Activated CD4-positive, alpha-beta T cell treated with anti-CD3 and anti-CD28 coated beads, Interleukin-2, amount 10 ng/mL, durations not matched to agents 24 days and 14 days (primary cell): ENCODE measurements at regions of chrX and their contacts with region 1.

Region 1: GRCh38 chrX:154458114-154458953 is at the start of gene PLXNA3:
- DNase-seq: peak; percentile 89
- H3K4me3 Mint-ChIP-seq: peak within 1 kb of the TSS; percentile 93
- H3K27ac Mint-ChIP-seq: peak within 1 kb of the TSS; percentile 96
- H3K4me1 Mint-ChIP-seq: peaks cover 6% of the 10 kb centered on the region
- H3K27me3 Mint-ChIP-seq: no peaks in the 10 kb centered on the region
- total RNA-seq, gene PLXNA3: 48.3 and 55.9 TPM in 2 replicates

Region 2: GRCh38 chrX:154443992-154444754 is 14.2 kb before region 1 on chrX and contains the start of gene FAM50A:
- intact Hi-C with region 1: loop called (anchors 1 kb)
- DNase-seq: peak; percentile 93
- H3K4me3 Mint-ChIP-seq: peak within 1 kb of the TSS; percentile 80
- H3K27ac Mint-ChIP-seq: peak within 1 kb of the TSS; percentile 80
- H3K4me1 Mint-ChIP-seq: peaks cover 8% of the 10 kb centered on the region
- H3K27me3 Mint-ChIP-seq: no peaks in the 10 kb centered on the region
- total RNA-seq, gene FAM50A: 85.4 and 85.9 TPM in 2 replicates